ENCODE measurements at regions of chr3 and their contacts with region 1.

Region 1: DNA sequence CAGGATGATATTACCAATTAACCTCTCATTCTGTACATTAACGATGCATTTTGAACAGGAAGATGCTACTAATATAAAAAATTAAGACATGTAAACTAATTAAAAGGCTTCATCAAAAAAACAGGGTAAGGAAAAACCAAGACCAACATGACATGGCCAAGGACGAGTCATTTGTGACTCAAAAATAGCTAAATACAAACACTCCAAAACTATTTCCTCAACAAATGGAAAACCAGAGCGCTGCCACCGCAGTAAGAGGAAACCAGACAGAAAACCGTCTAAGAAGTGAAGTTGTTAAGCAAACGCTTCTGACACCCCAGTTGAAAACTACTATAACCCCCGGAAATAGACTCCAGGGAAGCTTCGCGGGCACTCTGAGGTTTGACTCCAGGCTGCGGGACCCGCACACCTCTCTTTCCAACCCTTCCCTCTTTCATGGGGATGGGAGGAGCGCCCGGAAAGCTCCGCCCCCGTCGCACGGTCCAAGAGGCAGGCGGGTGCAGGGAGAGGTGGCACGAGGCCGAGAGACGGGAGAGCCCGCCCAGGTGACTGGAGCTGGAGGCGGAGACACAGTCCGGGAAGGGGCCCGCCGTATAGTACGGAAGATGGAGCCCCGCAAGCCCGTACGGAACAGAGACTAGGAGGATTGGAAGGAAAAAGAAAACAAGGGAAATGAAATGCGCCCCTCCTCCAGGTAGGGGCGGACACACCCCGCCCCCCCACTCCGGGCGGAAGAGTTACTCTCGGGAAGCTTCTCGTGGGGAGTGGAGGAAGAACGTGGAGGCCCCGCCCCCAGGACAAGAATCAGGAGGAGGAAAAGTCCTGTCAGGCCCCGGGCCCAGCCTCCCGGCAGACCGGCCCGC is 708 bp downstream of the DCAF1 start:
- DNase-seq: peak; percentile 94
- ATAC-seq: peak; percentile 75
- H3K4me3 Mint-ChIP-seq: peak overlapping the region; percentile 88
- H3K27ac Mint-ChIP-seq: peak overlapping the region; percentile 97
- H3K4me1 Mint-ChIP-seq: peaks cover 16% of the 10 kb centered on the region
- H3K27me3 Mint-ChIP-seq: no peaks in the 10 kb centered on the region

Region 2: DNA sequence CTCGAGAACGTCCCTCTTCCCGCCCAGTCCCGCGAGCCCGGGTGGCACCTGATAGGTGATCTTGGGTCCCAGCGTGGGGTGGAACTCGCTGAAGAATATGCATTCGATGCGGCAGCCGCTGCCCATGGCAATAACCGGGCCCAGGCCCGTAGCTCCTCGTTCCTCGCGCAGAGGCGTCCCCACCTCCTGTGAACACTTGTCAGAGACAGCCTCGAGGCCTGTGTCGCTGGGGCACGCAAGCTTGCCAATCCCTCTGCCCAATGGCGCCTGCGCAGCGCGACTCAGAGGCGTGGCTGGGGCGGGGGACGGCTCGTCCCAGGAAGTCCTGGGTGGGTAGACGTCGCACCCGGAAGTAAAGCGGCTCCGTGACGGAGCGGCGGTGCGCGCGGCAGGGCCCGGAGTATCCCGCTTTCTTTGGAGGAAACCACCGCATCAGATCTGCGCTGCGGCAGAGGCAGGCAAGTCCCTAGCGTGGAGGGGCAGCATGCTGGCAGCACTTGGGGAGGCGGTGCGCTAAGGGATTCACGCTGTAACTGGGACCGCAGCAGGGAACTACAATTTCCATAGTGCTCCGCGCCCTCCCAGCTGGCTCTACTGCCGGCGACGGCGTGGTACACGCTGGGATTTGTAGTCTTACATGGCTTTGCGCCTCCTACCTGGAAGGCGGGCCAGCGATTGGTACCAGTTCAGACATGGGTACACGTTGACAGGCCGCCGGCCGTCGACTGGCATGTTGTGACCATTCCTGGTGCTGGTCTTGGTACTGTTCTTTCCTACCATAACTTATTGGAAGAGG is 1148.4 kb before region 1 on chr3 and contains the starts of genes CYB561D2 and NPRL2:
- CTCF ChIA-PET with region 1: no interaction called
- POLR2A ChIA-PET with region 1: interaction called, 5 read pairs
- intact Hi-C with region 1: loop called in 1 of 2 experiments (anchors 5 kb)
- DNase-seq: peak; percentile 99
- ATAC-seq: peak; percentile 90
- H3K4me3 Mint-ChIP-seq: peak within 1 kb of the TSS; percentile 90
- H3K27ac Mint-ChIP-seq: peak within 1 kb of the TSS; percentile 97
- H3K4me1 Mint-ChIP-seq: peaks cover 55% of the 10 kb centered on the region
- H3K27me3 Mint-ChIP-seq: no peaks in the 10 kb centered on the region
- total RNA-seq, gene CYB561D2: 10.3 to 14.3 TPM
- total RNA-seq, gene NPRL2: 42.5 to 43.0 TPM

Region 3: GRCh38 chr3:51391075-51391567 is 108.0 kb before region 1 on chr3 and contains the start of gene RBM15B:
- CTCF ChIA-PET with region 1: interaction called, 19 read pairs
- POLR2A ChIA-PET with region 1: interaction called, 15 read pairs
- intact Hi-C with region 1: loop called (anchors 1 kb)
- DNase-seq: peak; percentile 99
- ATAC-seq: peak; percentile 96
- H3K4me3 Mint-ChIP-seq: peak within 1 kb of the TSS; percentile 81
- H3K27ac Mint-ChIP-seq: peak within 1 kb of the TSS; percentile 89
- H3K4me1 Mint-ChIP-seq: peaks cover 70% of the 10 kb centered on the region
- H3K27me3 Mint-ChIP-seq: no peaks in the 10 kb centered on the region
- total RNA-seq, gene RBM15B: 20.9 to 21.5 TPM

Region 4: DNA sequence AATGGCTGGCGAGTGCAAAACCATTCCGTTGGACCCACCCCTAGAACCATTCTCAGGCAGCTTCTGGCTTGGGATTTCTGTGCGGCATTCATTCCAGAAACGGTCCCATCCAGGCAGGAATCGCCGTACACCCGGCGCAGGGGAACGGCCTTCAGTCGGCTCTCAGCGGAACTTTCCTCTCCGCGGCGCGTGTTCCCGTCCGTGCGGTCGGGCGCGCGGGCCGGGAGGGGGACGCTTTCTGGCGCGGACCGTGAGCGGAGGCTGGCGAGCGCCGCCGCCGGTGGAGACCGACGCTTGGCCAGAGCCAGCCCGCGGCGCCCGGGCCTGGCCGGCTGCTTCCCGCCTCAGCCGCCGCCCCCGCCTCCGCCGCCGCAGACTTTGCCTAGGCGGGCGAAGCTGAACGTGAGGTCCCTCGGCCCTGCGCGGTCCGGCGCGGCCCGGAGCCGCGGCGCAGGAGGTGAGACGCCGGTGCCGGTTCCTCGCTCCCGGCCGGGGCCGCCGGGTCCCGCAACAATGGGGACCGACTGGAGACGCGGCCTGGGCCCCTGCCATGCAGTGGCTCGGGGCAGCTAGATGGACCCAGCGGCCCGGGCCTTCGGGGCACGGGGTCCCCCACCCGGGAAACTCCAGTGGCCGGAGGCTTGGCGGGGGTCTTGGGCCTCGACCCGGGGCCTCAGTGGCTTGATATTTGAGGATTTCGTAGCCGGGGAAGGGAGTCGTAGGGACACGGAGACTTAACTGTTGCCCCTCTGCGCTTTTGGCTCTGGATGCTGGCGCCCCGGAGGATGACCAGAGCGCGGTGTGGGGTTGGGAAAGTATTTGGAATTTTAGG is 39.6 kb after region 1 on chr3 and contains the start of gene RAD54L2:
- CTCF ChIA-PET with region 1: interaction called, 59 read pairs
- POLR2A ChIA-PET with region 1: interaction called, 15 read pairs
- intact Hi-C with region 1: loop called (anchors 1 to 2 kb)
- DNase-seq: peak; percentile 87
- ATAC-seq: peak; percentile 85
- H3K4me3 Mint-ChIP-seq: peak within 1 kb of the TSS; percentile 78
- H3K27ac Mint-ChIP-seq: peak within 1 kb of the TSS; percentile 94
- H3K4me1 Mint-ChIP-seq: peaks cover 32% of the 10 kb centered on the region
- H3K27me3 Mint-ChIP-seq: no peaks in the 10 kb centered on the region
- total RNA-seq, gene RAD54L2: 24.9 to 27.4 TPM

Region 5: GRCh38 chr3:51682079-51682478 is 183.0 kb after region 1 on chr3:
- CTCF ChIA-PET with region 1: interaction called, 102 read pairs
- POLR2A ChIA-PET with region 1: interaction called, 6 read pairs
- intact Hi-C with region 1: loop called (anchors 1 kb)
- DNase-seq: peak; percentile 83
- ATAC-seq: peak; percentile 86
- H3K4me3 Mint-ChIP-seq: no peak overlapping the region
- H3K27ac Mint-ChIP-seq: peak overlapping the region; percentile 80
- H3K4me1 Mint-ChIP-seq: peaks cover 92% of the 10 kb centered on the region
- H3K27me3 Mint-ChIP-seq: no peaks in the 10 kb centered on the region